GM10248 (cell line): ENCODE measurements at regions of chr1 and their contacts with region 1.

Region 1: DNA sequence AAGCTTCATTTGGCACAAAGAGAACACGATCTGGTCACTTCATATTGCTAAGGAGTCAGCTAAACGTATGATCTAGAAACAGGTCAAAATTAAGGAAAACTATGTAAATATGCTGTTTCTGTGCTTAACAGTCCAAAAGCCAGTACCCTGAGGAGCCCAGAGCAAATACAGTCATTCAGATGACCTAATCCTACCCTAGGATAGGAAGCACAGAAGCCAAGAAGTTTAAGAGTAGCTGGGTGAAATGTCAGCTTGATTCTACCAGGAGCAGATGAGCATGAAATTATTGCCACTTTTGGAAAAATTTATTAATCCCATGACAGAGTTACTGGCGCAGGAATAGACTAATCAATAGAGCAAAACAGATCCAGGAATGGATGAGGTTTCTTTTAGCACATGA is 18.3 kb downstream of the SORT1 start:
- DNase-seq: no peak
- CTCF ChIP-seq: no peak

Region 2: DNA sequence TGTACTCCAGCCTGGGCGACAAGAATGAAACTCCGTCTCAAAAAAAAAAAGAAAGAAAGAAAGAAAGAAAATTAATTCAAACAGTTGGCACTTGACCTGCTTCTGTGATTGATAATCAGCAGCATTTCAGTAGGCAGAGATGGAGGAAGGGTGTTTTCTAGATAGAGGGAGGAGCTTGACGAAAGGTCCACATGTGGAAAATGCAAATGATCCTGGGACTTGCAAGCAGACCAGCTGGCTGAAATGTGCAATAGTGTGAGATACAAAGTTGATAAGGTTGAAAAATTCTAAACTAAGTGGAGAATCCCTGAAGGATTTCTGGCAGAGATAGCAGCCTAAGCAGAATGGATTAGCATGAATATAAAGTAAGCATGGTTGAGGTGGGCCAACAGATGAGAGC is 261.3 kb before region 1 on chr1:
- CTCF ChIA-PET with region 1: no interaction called
- POLR2A ChIA-PET with region 1: no interaction called
- DNase-seq: no peak
- CTCF ChIP-seq: no peak

Region 3: GRCh38 chr1:109391626-109392025 is 12.2 kb after region 1 on chr1:
- CTCF ChIA-PET with region 1: interaction called, 12 read pairs
- POLR2A ChIA-PET with region 1: no interaction called
- DNase-seq: peak; percentile 64
- CTCF ChIP-seq: no peak